SK-N-SH (cell line): ENCODE measurements at regions of chr11 and their contacts with region 1.

Region 1: DNA sequence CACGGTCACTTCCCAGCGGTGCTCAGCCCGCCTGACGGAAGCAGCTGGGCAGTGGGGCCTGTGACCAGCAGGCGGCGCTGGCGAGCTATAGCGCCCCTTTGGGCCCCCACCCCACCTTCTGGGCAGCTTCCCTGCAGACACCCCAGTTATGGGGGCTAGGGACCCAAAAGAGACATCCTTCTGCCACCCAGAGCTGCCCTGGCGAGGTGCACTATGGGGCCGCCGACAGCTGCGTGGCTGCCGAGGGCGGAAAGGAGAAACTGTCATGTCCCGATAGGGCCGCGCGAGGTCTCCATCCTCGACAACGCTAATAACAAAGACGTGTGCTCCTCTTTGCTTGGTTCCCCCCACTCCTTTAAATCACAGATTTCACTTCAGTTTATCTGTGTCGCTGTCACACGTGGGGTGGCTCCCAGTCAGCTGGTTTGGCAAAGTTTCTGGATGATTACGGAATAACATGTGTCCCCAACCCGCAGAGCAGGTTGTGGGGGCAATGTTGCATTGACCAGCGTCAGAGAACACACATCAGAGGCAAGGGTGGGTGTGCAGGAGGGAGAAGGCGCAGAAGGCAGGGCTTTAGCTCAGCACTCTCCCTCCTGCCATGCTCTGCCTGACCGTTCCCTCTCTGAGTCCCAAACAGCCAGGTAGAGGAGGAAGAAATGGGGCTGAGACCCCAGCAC is 674 bp upstream of the MYO7A start:
- DNase-seq: peak; percentile 89
- H3K4me3 ChIP-seq: peak overlapping the region; percentile 47 to 74
- H3K27ac ChIP-seq: peak overlapping the region in 1 of 2 experiments; percentile 13; a peak in 1 of 4 replicates
- H3K4me1 ChIP-seq: peaks cover 0 to 42% of the 10 kb centered on the region in 2 experiments; a peak in 2 of 4 replicates
- H3K27me3 ChIP-seq: no peaks in the 10 kb centered on the region
- CTCF ChIP-seq: peak; percentile 100
- EP300 ChIP-seq: no peak
- RAD21 ChIP-seq: peak; percentile 71

Region 2: DNA sequence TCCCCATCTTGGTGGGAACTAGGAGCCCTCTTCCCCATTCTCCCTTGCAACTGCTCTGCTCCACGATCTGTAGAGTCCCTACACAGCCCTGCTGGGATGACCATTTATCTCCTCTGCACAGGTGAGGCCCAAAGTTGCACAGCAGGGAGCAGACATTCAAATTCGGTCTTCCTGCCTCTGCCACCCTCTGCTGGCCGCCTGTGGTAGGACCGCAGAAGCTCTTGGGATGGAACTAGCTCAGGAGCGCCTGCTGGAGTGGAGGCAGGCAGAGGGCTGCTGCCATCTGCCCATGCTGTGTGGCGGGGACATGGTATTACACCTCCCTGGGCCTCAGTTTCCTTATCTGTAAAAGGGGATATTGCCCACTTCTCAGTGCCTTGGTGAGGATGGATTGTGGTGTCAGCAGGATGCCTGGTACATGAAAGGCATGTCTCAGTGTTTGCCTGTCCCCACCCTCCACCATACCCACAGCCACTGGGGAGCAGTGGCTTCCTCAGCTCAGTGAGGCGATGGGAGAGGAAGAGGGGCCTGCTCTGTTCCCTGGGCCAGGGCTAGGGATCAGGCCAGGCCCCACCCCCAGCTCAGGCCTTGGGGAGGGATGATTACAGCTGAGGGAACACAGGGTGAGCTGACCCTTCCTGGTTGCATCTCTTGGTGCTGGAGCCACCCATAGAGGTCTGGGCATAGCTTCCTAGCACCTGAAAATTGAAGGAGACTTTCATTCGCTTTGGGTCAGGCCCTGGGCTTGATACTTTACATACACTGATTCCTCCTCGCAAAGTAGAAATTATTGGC is 36.0 kb before region 1 on chr11:
- CTCF ChIA-PET with region 1: interaction called, 15 read pairs
- POLR2A ChIA-PET with region 1: interaction called, 3 read pairs
- DNase-seq: peak; percentile 93
- H3K4me3 ChIP-seq: no peak overlapping the region; a peak in 1 of 4 replicates
- H3K27ac ChIP-seq: no peak overlapping the region
- H3K4me1 ChIP-seq: peaks cover 0 to 21% of the 10 kb centered on the region in 2 experiments; a peak in 1 of 4 replicates
- H3K27me3 ChIP-seq: no peaks in the 10 kb centered on the region
- CTCF ChIP-seq: peak; percentile 89
- EP300 ChIP-seq: no peak
- RAD21 ChIP-seq: peak; percentile 95

Region 3: DNA sequence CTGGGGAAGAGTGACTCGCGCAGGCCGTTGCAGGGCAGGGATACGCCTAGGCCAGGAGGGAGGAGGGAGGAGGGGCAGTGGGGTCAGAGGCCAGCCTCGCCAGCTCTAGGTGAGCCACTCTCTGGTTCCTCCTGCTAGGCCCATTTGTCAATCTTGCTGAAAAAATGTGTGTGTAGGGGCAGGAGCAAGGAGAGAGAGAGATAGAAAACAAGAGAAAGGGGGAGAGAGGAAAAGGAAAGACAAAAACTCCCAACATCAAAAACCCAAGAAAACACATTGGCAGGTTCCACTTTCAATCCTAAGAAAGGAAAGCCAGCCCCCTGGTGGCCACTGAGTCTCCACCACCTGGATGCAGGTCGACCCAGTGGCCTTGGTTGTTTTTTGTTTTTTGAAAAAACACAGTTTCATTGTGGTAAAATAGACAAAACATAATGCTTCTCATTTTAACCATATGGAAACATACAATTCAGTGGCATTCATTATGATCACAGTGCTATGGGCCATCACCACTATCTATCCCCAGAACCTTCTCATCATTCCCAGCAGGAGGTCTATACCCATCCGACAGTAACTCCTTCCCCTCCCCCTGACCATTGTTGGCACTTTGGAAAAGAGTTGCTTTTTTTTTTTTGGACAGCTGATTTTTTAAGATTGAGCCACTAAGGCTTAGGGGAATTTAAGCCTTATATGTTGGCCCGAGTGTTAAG is 13.8 kb before region 1 on chr11:
- CTCF ChIA-PET with region 1: interaction called, 111 read pairs
- POLR2A ChIA-PET with region 1: no interaction called
- DNase-seq: peak; percentile 74
- H3K4me3 ChIP-seq: no peak overlapping the region; a peak in 1 of 4 replicates
- H3K27ac ChIP-seq: no peak overlapping the region
- H3K4me1 ChIP-seq: peaks cover 3 to 27% of the 10 kb centered on the region in 2 experiments; a peak in 3 of 4 replicates
- H3K27me3 ChIP-seq: no peaks in the 10 kb centered on the region
- CTCF ChIP-seq: peak; percentile 65
- EP300 ChIP-seq: no peak
- RAD21 ChIP-seq: peak; percentile 67

Region 4: DNA sequence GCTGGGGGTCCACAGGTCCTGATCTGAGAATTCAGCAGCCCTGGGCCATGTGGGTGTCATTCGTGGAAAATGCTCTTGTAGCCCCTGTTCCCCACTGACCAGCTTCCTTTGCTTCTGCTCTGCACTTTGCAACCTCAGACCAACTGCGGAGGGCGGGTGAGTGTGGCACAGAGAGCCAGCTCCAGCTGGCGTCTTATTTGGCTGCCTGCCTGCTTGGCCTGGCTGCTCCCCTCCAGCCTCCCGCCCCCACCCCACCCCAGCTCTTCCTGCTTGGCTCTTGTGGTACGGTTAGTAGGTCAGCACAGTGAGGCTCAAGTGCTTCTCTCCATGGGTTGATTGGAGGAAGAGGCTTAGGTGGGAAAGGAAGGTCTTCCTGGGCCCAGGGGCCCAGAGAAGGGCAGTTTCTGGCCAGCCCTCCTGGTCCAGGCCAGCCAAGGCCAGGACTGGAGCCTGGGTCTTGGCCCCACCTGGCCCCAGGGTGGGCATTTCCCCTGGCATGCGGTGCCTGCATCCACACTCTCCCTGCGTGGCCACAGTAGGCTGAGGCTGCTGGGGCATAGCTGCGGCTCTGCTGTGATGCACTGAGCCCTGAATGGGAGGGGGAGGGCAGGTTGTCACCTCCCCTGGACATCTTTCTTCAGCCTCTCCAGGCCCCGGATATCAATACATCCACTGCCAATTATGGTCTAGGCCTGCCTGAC is 27.2 kb after region 1 on chr11:
- CTCF ChIA-PET with region 1: interaction called, 15 read pairs
- POLR2A ChIA-PET with region 1: no interaction called
- DNase-seq: no peak
- H3K4me3 ChIP-seq: no peak overlapping the region
- H3K27ac ChIP-seq: no peak overlapping the region
- H3K4me1 ChIP-seq: peaks cover 0 to 13% of the 10 kb centered on the region in 2 experiments; a peak in 1 of 4 replicates
- H3K27me3 ChIP-seq: no peaks in the 10 kb centered on the region
- CTCF ChIP-seq: no peak
- EP300 ChIP-seq: no peak
- RAD21 ChIP-seq: no peak

Region 5: GRCh38 chr11:77187776-77188632 is 60.6 kb after region 1 on chr11:
- CTCF ChIA-PET with region 1: interaction called, 270 read pairs
- POLR2A ChIA-PET with region 1: interaction called, 7 read pairs
- DNase-seq: peak; percentile 90
- H3K4me3 ChIP-seq: peak overlapping the region in 1 of 2 experiments; percentile 14; a peak in 1 of 4 replicates
- H3K27ac ChIP-seq: no peak overlapping the region
- H3K4me1 ChIP-seq: no peaks in the 10 kb centered on the region
- H3K27me3 ChIP-seq: no peaks in the 10 kb centered on the region
- CTCF ChIP-seq: peak; percentile 93
- EP300 ChIP-seq: no peak
- RAD21 ChIP-seq: peak; percentile 93

Region 6: DNA sequence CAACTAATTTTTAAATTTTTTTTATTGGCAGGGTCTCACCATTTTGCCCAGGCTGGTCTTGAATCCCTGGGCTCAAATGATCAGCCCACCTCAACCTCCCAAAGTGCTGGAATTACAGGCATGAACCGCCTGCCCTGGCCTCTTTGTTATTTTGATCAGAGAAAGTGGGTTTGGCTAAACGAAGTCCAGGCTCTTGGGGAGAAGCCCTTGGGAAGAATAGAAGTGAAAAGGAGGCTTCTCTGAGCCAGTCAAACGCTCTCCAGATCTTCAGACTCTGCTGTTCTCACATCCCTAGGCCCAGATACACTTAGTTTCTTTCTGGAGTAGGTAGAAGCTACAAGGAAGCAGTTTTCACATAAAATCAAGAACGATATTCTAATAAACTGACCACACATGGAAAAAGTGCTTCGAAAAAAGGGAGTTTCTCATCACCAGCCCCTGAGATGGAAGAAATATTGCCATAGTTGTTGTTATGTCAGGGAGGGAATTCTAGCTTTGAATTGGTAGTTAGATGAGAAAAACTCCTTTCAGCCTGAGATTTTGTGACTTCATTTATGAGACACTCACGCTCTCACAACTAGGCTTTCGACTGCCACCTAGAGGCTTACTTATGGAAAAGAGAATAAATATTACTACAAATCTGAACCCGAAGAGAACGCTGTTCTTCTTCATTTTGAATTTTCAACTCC is 420.6 kb after region 1 on chr11:
- CTCF ChIA-PET with region 1: interaction called, 50 read pairs
- POLR2A ChIA-PET with region 1: no interaction called
- DNase-seq: peak; percentile 50
- H3K4me3 ChIP-seq: no peak overlapping the region
- H3K27ac ChIP-seq: no peak overlapping the region
- H3K4me1 ChIP-seq: no peaks in the 10 kb centered on the region
- H3K27me3 ChIP-seq: no peaks in the 10 kb centered on the region
- CTCF ChIP-seq: peak; percentile 77
- EP300 ChIP-seq: no peak
- RAD21 ChIP-seq: peak; percentile 91